ENCODE measurements at regions of chr3 and their contacts with region 1.

Region 1: DNA sequence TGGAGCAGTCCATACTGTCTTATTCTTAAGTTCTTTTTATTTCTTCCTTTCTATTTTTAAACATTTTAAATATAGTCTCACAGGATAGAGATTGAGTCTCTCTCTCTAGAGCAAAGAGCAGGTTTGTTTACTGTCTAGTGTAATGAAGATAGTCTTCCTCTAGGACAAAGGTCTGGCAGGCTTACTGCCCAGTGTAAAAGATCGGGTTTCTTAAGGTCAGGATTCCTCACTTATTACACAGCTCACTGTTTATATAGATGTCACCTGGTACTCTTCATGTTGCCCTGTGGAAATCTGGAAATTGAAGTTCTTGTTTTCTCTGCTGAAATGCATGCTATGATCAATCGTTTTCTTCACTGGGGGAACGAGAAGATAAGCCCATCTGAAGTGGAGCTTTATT is 76.0 kb downstream of the ZBBX start:
- DNase-seq: peak in 1 of 2 donors; percentile 32
- ATAC-seq: peak; percentile 89 to 100 (median 98)
- H3K4me3 ChIP-seq: no peak overlapping the region
- H3K27ac ChIP-seq: peak overlapping the region in 4 of 10 donors; percentile 17 to 73 (median 34)
- H3K4me1 ChIP-seq: peaks cover 0 to 13% (median 3%) of the 10 kb centered on the region in 9 donors
- H3K27me3 ChIP-seq: no peaks in the 10 kb centered on the region
- CTCF ChIP-seq: no peak

Region 2: GRCh38 chr3:167166594-167167253 is 137.4 kb before region 1 on chr3:
- intact Hi-C with region 1: loop called in 1 of 10 experiments (anchors 10 kb)
- DNase-seq: peak; percentile 10 to 72
- ATAC-seq: peak; percentile 83 to 98 (median 90)
- H3K4me3 ChIP-seq: peak overlapping the region in 3 of 10 donors; percentile 2 to 17 (median 12)
- H3K27ac ChIP-seq: peak overlapping the region in 9 of 10 donors; percentile 1 to 75 (median 69)
- H3K4me1 ChIP-seq: peaks cover 0 to 35% (median 22%) of the 10 kb centered on the region in 9 donors
- H3K27me3 ChIP-seq: no peaks in the 10 kb centered on the region
- CTCF ChIP-seq: peak in 2 of 9 donors; percentile 19 to 21

Region 3: DNA sequence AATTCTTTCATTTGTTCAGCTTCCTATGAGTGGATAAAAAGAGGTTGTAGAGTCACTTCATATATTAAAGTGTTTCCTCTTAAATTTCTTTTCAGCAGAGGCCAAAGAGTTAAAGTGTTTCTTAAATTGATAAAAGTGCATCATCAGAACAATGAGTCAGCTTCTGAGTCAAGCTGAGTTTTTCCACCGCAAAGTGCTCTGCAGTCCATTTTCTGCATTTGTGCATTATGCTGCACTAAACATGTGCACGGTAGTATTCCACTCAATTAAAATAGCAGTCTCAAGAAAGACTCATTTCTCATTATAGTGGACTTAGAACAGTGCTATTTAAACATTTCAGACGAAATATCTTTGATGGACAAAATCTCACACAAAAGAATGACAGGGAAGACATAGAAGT is 75.9 kb before region 1 on chr3:
- intact Hi-C with region 1: loop called in 1 of 10 experiments (anchors 10 kb)
- DNase-seq: no peak
- ATAC-seq: no peak
- H3K4me3 ChIP-seq: no peak overlapping the region
- H3K27ac ChIP-seq: no peak overlapping the region
- H3K4me1 ChIP-seq: peaks cover 0 to 7% (median 0%) of the 10 kb centered on the region in 9 donors
- H3K27me3 ChIP-seq: no peaks in the 10 kb centered on the region
- CTCF ChIP-seq: no peak

Region 4: DNA sequence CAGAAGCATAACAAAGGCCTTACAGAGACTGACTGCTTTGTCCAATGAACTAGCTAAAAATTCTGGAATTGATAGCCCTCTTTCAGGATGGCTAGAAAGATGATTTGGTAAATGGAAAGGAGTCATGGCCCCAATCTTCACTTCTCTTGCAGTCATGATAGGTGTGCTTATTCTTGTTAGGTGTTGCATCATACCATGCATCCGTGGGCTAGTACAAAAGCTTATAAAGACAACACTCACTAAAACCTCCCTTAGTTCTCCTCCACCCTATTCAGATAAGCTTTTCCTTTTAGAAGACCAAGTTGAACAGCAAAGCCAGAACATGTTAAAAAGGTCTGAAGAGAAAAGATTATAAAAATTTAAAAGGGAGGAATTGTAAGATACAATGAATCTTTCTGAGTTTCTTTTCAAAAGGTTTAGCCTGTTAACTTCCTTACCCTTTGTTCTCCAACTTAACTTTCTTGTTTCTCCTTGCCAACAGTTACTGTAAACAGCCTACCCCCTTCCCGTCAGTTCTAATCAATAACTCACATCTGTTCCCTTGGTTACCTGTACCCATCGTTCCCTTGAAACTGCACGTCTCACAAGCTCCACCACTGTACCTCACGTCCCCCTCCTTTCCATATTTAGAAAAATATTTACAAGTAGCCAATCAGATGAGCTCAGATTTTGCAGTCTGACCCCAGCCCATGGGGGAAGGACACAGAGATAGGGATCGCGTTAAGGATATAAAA is 29.8 kb before region 1 on chr3:
- intact Hi-C with region 1: no loop called
- DNase-seq: no peak
- ATAC-seq: no peak
- H3K4me3 ChIP-seq: no peak overlapping the region
- H3K27ac ChIP-seq: no peak overlapping the region
- H3K4me1 ChIP-seq: no peaks in the 10 kb centered on the region
- H3K27me3 ChIP-seq: no peaks in the 10 kb centered on the region
- CTCF ChIP-seq: no peak

Measured in heart right ventricle (tissue), 16 donors.